Esophagus muscularis mucosa (tissue), 4 donors: ENCODE measurements at regions of chr7 and their contacts with region 1.

Region 1: DNA sequence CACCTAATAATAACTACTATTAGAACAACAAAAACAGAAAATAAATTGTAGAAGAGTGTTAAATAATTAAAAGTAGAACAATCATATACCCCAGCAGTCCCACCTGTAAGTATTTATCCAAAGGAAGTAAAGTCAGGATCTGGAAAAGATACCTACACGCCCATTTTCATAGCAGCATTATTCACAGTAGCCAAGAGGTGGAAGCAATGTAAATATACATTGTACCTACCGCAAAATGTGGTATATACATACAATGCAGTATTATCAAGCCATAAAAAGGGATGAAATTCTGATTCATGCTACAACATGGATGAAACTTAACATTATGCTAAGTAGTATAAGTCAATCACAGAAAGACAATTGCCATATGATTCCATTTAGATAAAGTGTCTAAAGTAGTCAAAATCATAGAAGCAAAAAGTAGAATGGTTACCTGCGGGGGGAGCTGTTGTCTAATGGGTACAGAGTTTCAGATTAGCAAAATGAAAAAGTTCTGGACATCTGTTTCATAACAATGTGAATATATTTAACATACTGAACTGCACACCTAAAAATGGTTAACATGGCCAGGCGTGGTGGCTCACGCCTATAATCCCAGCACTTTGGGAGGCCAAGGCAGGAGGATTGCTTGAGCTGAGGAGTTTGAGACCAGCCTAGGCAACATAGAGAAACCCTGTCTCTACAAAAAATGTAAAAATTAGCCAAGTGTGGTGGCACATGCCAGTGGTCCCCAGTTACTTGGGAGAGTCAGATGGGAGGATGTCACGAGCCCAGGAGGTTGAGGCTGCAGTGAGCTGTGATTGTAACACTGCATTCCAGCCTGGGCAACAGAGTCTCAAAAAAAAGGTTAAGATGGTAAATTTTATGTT is 6.0 kb upstream of the TMED4 start:
- DNase-seq: no peak
- H3K4me3 ChIP-seq: no peak overlapping the region
- H3K27ac ChIP-seq: no peak overlapping the region
- H3K4me1 ChIP-seq: peaks cover 0 to 9% (median 4%) of the 10 kb centered on the region in 4 donors
- H3K27me3 ChIP-seq: no peaks in the 10 kb centered on the region
- CTCF ChIP-seq: peak; percentile 53 to 60 (median 55)
- EP300 ChIP-seq: no peak
- POLR2A ChIP-seq: no peak

Region 2: GRCh38 chr7:44638611-44639557 is 50.8 kb after region 1 on chr7:
- intact Hi-C with region 1: loop called (anchors 5 kb)
- DNase-seq: no peak
- H3K4me3 ChIP-seq: no peak overlapping the region
- H3K27ac ChIP-seq: peak overlapping the region; percentile 77 to 80 (median 78)
- H3K4me1 ChIP-seq: peaks cover 57 to 65% (median 64%) of the 10 kb centered on the region in 4 donors
- H3K27me3 ChIP-seq: no peaks in the 10 kb centered on the region
- CTCF ChIP-seq: no peak
- EP300 ChIP-seq: no peak
- POLR2A ChIP-seq: no peak

Region 3: GRCh38 chr7:44847508-44847920 is 259.4 kb after region 1 on chr7:
- intact Hi-C with region 1: loop called (anchors 2 kb)
- DNase-seq: peak; percentile 97
- H3K4me3 ChIP-seq: peak overlapping the region; percentile 79 to 87 (median 80)
- H3K27ac ChIP-seq: peak overlapping the region; percentile 92 to 99 (median 98)
- H3K4me1 ChIP-seq: peaks cover 28 to 51% (median 41%) of the 10 kb centered on the region in 4 donors
- H3K27me3 ChIP-seq: no peaks in the 10 kb centered on the region
- CTCF ChIP-seq: peak; percentile 87 to 92 (median 91)
- EP300 ChIP-seq: no peak
- POLR2A ChIP-seq: no peak

Region 4: DNA sequence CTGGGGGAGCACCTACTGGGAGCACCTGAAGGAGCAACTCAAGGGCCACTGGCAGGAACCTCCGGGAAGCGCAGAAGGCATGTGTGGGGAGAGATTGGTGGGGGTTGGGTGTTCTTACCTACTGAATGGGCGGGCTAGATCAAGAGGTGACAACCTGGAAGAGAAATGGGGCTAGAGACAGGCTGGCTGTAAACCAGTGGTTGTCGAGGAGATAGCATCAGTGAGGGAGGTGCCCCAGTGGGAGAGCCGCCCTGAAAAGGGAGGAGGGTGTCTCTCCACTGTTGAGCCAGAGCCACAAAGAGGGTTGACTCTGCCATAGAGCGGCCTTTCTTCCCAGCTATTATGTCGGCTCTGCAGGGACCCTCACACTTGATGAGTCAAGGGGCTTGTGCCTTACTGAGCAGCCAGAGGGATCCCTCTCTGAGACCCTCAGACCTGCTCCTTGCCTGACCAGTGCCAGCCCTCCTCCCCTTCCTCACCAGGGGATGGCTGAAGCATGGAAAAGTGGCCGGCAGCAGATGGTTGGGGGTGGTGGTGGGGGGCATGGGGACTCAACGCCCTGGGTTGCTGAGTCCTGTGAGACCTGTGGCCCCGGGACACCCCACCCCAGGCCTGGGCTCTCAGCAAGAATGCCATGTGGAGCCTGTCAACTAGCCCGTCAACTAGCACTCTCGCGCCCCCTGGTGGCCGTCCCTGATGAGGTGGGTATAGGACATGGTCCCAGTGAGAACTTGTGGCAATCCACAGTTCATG is 333.7 kb after region 1 on chr7:
- intact Hi-C with region 1: loop called (anchors 5 kb)
- DNase-seq: peak; percentile 99
- H3K4me3 ChIP-seq: no peak overlapping the region
- H3K27ac ChIP-seq: no peak overlapping the region
- H3K4me1 ChIP-seq: peaks cover 0 to 8% (median 4%) of the 10 kb centered on the region in 4 donors
- H3K27me3 ChIP-seq: no peaks in the 10 kb centered on the region
- CTCF ChIP-seq: peak; percentile 79 to 91 (median 88)
- EP300 ChIP-seq: no peak
- POLR2A ChIP-seq: no peak